GM23248 (cell line): ENCODE measurements at regions of chr9 and their contacts with region 1.

Region 1: GRCh38 chr9:130707225-130707976 is 13.8 kb downstream of the EXOSC2 start:
- DNase-seq: peak; percentile 74
- H3K4me3 ChIP-seq: no peak overlapping the region
- H3K27ac ChIP-seq: no peak overlapping the region
- H3K4me1 ChIP-seq: no peaks in the 10 kb centered on the region
- H3K27me3 ChIP-seq: no peaks in the 10 kb centered on the region

Region 2: DNA sequence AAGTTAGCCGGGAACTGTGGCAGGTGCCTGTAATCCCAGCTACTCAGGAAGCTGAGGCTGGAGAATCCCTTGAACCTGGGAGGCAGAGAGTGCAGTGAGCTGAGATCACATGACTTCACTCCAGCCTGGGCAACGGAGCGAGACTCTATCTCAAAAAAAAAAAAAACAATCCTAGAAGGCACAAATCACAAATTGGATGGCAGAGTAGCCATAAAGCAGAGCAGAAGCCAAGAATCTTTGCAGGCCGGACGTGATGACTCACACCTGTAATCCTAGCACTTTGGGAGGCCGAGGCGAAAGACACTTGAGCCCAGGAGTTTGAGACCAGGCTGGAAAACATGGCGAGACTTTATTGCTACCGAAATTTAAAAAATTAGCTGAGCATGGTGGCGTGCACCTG is 137.2 kb before region 1 on chr9:
- in situ Hi-C with region 1: no loop called
- DNase-seq: peak; percentile 42
- H3K4me3 ChIP-seq: no peak overlapping the region
- H3K27ac ChIP-seq: no peak overlapping the region
- H3K4me1 ChIP-seq: no peaks in the 10 kb centered on the region
- H3K27me3 ChIP-seq: no peaks in the 10 kb centered on the region

Region 3: GRCh38 chr9:130860458-130861316 is 153.3 kb after region 1 on chr9:
- in situ Hi-C with region 1: loop called (anchors 5 kb)
- DNase-seq: peak; percentile 99
- H3K4me3 ChIP-seq: peak overlapping the region; percentile 42
- H3K27ac ChIP-seq: peak overlapping the region; percentile 92
- H3K4me1 ChIP-seq: peaks cover 52% of the 10 kb centered on the region
- H3K27me3 ChIP-seq: no peaks in the 10 kb centered on the region

Region 4: DNA sequence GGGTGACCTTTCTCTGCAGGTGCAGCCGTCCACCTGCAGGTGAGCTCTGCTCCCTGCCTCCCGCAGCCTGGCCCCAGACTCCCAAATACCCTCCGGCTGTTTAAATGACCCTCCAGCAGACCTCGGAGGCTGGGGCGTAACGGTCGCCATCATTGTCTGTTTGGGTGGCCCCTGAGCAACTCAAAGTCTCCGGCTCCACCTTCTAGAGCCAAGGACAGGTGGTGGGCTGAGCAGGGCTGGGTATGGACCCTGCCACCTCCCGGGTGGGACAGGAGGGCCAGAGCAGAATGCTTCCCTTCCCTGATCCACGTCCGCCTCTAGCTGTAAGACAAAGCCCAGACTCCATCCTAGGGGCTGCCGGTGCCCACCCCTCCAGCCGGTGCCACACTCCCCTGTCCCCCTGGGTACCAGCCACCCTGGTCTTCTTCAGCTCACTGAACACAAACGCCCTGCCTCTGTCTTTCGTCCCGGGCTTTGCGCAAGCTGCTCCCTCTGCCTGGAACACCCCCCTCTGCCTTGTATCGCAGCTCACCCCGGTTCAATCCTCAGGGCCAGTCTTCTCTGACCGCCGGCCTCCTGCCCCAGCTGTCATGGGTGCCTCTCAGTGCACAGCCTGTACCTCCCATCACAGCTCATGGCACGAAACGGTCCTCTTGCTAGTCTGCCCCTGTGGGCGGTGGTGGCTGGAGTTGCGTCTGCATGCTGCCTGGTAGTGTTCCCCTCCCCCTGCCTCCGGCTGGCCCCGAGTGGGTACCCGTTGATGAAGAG is 266.0 kb after region 1 on chr9:
- in situ Hi-C with region 1: no loop called
- DNase-seq: no peak
- H3K4me3 ChIP-seq: no peak overlapping the region
- H3K27ac ChIP-seq: no peak overlapping the region
- H3K4me1 ChIP-seq: no peaks in the 10 kb centered on the region
- H3K27me3 ChIP-seq: peaks cover 16% of the 10 kb centered on the region

Region 5: GRCh38 chr9:131418143-131419028 is 711.0 kb after region 1 on chr9:
- in situ Hi-C with region 1: no loop called
- DNase-seq: peak; percentile 51
- H3K4me3 ChIP-seq: no peak overlapping the region
- H3K27ac ChIP-seq: peak overlapping the region; percentile 45
- H3K4me1 ChIP-seq: peaks cover 48% of the 10 kb centered on the region
- H3K27me3 ChIP-seq: no peaks in the 10 kb centered on the region

Region 6: DNA sequence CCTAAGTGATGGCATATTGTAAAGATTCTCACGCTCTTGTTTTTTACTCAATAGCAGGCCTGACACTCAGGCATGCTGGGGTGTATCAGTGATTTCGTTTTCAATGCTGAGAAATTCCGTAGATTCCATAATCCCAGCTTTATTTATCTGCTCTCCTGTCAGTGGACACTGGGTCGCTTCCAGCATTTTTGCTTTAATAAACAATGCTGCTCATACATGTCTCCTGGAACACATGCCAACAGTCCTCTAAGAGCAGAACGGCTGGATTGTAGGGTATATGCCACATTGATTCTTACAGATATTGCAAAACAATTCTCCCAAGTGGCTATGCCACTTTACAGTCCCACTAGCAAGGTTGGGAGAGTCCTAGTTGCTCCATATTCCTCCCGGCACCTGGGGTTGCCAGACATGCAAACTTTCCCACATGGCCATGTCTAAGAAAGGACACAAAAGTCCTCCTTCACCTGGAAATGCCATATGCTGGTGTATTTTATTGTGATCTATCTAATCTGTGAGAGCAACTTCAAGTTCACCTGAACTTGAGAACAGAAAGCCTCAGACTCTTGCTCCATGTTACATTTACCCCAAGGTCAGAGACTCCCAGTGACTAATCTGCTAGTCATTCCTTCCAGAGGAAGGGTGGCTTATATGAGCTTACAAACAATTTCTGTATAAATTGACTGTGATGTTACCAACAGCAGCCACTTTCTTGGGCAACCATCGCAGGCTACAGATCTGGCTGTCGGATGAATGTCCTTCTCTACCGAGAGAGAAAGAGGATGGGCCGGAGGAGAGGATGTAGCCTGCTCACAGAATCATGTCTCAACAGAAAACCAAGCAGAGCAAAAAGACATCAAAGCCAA is 950.7 kb after region 1 on chr9:
- in situ Hi-C with region 1: no loop called
- DNase-seq: peak; percentile 93
- H3K4me3 ChIP-seq: peak overlapping the region; percentile 46
- H3K27ac ChIP-seq: peak overlapping the region; percentile 91
- H3K4me1 ChIP-seq: peaks cover 19% of the 10 kb centered on the region
- H3K27me3 ChIP-seq: no peaks in the 10 kb centered on the region